ENCODE measurements at regions of chrX and their contacts with region 1.

Region 1: DNA sequence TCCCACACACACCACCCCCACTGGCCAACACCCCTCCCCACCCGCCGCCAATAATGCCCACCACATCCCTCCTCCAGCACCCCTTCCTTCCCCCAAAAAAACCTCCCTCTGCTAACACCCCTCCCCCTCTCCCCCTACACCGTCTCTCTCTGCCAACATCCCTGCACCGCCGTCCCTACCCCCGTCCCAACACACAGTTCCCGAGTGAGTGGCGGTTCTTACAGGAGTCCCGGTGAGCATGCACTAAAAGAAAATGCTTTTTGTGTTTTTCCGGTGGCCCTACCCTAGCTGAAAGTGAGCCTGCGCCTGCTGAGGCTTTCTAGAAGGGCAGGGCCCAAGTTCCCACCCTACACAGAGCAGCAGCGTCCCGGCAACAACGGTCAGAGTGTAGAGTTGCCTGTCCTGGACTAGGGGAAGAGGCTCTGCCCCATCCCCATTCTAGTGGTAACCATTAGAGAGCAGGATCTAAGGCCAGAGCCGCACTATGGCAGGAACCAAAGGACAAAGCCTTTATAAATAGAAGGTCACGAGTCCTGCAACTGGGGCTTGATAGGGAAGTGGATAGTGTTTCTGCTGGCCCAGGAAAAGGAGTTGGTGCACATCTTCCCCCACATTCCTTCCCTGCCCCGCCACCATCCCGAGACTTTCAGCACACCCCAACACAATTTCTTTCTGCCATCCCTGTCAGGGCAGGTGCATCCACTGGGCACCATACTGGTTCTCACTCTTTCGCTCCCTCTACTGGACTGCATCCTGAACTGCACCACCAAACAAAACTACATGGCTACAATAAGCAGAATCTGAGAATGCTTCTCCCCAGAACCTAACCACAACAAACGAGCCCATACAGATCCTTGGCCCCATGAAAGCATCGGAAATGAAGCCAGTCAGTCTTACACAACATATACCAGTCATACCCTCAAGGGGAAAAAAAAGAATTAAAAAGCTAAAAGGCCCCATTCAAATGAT is 78.1 kb upstream of the PAGE3 start:
- DNase-seq: no peak
- ATAC-seq: peak; percentile 41 to 54
- H3K4me3 ChIP-seq: no peak overlapping the region
- H3K27ac ChIP-seq: peak overlapping the region in 1 of 4 donors; percentile 26
- H3K4me1 ChIP-seq: no peaks in the 10 kb centered on the region
- H3K27me3 ChIP-seq: no peaks in the 10 kb centered on the region
- CTCF ChIP-seq: peak; percentile 13 to 54 (median 39)
- POLR2A ChIP-seq: no peak

Region 2: DNA sequence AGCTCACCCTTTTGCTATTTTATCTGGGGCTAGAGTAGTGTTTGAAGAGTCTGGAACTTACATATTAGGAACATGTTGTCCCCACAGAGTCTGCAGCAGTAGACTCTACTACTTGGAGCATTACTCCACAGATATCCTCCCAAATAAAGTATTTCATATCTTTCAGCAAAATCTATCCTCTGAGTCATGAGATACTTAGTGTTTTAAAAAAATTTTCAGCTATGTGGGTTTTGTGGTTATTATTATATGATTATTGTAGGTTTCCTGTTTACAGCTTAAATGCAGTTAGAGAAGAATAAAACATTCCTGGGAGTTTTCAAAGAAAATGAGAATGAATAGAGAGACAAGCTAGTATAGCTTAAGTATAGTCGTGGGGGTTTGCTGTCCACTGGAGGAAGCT is 223.1 kb before region 1 on chrX:
- in situ Hi-C with region 1: loop called in 1 of 4 experiments (anchors 25 kb)
- intact Hi-C with region 1: no loop called
- DNase-seq: no peak
- ATAC-seq: no peak
- H3K4me3 ChIP-seq: no peak overlapping the region
- H3K27ac ChIP-seq: no peak overlapping the region
- H3K4me1 ChIP-seq: no peaks in the 10 kb centered on the region
- H3K27me3 ChIP-seq: peaks cover 0 to 9% (median 3%) of the 10 kb centered on the region in 3 donors
- CTCF ChIP-seq: no peak
- POLR2A ChIP-seq: no peak

Region 3: GRCh38 chrX:55135171-55135570 is 207.6 kb before region 1 on chrX:
- in situ Hi-C with region 1: loop called in 1 of 4 experiments (anchors 10 kb)
- intact Hi-C with region 1: loop called (anchors 2 kb)
- DNase-seq: peak; percentile 1 to 13
- ATAC-seq: peak in 1 of 2 donors; percentile 61
- H3K4me3 ChIP-seq: no peak overlapping the region
- H3K27ac ChIP-seq: no peak overlapping the region
- H3K4me1 ChIP-seq: no peaks in the 10 kb centered on the region
- H3K27me3 ChIP-seq: no peaks in the 10 kb centered on the region
- CTCF ChIP-seq: peak in 4 of 5 experiments; percentile 43 to 59 (median 48)
- POLR2A ChIP-seq: no peak

Region 4: DNA sequence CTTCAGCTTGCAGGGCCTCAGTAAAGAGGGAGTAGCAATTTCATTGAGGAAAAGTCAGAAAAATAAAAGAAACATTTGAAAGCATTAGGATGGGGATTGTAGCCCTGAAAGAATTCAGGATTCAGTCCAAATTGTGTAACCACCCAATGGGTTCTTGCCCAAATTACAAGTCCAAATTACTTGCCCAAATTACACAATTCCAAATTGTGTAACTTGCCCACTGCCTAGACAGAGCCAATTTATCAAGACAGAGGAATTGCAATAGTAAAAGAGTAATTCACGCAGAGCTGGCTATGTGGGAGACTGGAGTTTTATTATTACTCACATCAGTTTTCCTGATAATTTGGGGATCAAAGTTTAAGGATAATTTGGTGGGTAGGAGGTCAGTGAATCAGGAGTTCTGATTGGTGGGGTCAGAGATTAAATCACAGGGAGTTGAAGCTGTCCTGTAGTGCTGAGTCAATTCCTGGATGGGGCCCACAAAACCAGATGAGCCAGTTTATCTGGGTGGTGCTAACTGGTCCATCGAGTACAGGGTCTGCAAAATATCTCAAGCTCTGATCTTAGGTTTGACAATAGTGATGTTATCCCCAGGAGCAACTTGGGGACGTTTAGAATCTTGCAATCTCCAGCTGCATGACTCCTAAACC is 140.8 kb before region 1 on chrX:
- in situ Hi-C with region 1: no loop called
- intact Hi-C with region 1: no loop called
- DNase-seq: no peak
- ATAC-seq: no peak
- H3K4me3 ChIP-seq: no peak overlapping the region
- H3K27ac ChIP-seq: no peak overlapping the region
- H3K4me1 ChIP-seq: no peaks in the 10 kb centered on the region
- H3K27me3 ChIP-seq: no peaks in the 10 kb centered on the region
- CTCF ChIP-seq: no peak
- POLR2A ChIP-seq: no peak